ENCODE measurements at regions of chr1 and their contacts with region 1.

Region 1: DNA sequence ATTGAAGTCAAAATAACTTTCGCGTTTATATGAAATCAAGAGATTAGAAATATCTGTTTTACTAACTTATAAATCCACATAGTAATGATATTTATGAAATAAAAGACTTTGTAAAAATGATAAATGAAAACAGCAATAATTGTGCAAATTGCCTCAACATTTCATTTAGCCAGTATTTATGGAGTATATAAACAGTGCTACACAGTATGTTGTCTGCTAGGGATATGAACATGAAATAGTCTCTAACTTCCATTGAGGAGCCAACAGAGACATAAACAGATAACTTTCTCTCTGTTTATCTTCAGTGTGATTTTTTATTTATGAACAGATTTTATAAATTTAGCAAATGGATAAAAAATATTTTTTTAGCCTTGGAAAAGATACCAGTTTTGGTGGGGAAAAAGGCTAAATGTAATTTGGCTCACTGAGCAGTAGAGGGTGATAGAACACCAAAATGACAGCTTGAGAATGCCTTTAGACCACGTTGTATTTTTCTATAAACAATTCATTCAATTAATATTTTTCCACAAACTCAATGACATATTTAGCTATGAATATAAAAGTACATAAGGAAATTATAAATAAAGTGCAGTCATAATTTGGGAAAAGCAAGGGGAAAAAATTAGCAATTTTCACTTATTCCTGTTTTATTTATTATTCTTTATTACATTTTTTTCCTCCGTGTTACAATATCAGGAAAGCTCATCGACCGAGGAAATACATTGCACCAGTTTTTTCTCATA is 47.5 kb upstream of the EEIG2 start:
- DNase-seq: peak in 1 of 2 experiments; percentile 53
- H3K4me3 ChIP-seq: no peak overlapping the region
- H3K27ac ChIP-seq: no peak overlapping the region
- H3K4me1 ChIP-seq: 0 out of 2 replicates have a peak, but pooled peaks cover 5% of the 10 kb centered on the region
- H3K27me3 ChIP-seq: no peaks in the 10 kb centered on the region
- CTCF ChIP-seq: peak; percentile 97

Region 2: GRCh38 chr1:108559215-108560186 is 47.1 kb after region 1 on chr1 and contains the start of gene EEIG2:
- CTCF ChIA-PET with region 1: interaction called, 5 read pairs
- POLR2A ChIA-PET with region 1: no interaction called
- intact Hi-C with region 1: loop called (anchors 1 kb)
- DNase-seq: peak; percentile 69 to 89
- H3K4me3 ChIP-seq: peak within 1 kb of the TSS; percentile 69
- H3K27ac ChIP-seq: 0 out of 2 replicates have a peak within 1 kb of the TSS, but pooled peaks have one; percentile 18
- H3K4me1 ChIP-seq: peaks cover 26% of the 10 kb centered on the region
- H3K27me3 ChIP-seq: no peaks in the 10 kb centered on the region
- CTCF ChIP-seq: peak; percentile 62; the same call in 1 of the 2 replicates
- total RNA-seq, gene EEIG2: 31.6 and 31.9 TPM in 2 replicates

Region 3: DNA sequence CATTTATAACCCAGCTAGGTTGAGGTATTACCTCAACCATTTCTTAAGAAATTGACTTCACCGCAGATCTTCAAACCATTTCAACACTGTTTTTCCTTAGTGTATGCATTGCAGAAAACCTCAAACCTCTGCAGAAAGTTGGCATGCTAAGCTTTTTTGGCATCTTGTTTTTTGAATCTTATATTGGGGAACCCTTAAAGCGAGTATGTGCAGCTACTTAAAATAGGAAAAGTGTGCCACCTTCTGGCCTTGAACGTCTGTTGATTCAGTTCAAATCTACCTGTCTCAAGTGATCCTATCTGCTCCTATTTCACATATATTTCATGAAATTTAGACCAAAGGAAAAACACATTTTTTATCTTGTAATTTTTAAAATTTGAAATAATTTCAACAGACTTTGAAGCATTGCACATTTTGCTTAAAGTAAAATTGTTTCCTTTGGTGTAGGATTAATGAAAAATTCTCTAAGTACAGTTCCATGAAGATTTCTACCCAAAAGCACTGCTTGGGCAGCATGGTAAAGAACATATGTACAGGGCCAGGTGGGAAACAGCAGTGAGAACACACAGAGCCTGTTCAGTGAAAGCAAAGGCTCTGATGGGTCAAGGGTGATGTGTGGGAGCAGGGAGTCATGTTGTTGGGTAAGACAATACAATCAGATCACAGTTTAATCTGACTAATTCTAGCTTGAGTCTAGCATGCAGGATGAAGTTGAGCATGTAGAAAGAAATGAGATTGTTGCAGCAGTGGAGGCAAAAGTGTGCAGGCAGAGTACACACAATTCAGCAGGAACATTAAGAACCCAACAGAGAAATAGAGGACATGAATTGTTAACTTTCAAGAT is 131.3 kb after region 1 on chr1:
- CTCF ChIA-PET with region 1: interaction called, 3 read pairs
- POLR2A ChIA-PET with region 1: no interaction called
- intact Hi-C with region 1: loop called (anchors 1 kb)
- DNase-seq: peak; percentile 23 to 69
- H3K4me3 ChIP-seq: no peak overlapping the region
- H3K27ac ChIP-seq: no peak overlapping the region
- H3K4me1 ChIP-seq: peaks cover 11% of the 10 kb centered on the region
- H3K27me3 ChIP-seq: no peaks in the 10 kb centered on the region
- CTCF ChIP-seq: peak; percentile 82

Region 4: DNA sequence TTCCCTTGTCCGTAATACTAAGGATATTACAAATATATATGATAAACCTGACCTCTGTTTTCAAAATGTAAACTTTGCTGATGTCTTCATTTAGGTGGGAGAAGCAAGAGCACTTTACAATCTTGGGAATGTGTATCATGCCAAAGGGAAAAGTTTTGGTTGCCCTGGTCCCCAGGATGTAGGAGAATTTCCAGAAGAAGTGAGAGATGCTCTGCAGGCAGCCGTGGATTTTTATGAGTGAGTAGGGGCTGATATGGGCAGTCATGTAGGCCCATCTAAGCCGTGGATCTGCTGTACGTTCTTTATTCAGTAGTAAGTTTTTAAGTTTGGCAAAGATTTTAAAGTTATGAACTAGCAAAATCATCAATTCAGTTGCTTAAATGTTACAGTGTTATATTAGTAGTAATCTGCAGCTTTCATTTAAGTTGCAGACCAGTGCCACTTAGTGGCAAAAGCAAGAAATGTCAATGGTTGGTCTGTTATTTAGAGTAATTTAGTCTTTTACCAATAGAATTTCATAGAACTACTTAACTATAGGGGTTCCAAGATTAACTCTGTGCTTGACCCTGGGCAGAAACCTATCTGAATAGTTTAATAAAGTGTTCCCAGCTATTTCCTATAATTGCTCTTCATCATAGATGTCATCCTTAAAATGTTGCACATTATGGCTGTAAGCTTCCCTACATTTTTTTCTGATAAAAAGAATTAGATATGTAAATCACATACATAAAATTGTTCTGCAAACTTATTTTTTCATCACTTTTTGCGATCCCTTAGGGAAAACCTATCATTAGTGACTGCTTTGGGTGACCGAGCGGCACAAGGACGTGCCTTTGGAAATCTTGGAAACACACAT is 385.7 kb after region 1 on chr1:
- CTCF ChIA-PET with region 1: no interaction called
- POLR2A ChIA-PET with region 1: no interaction called
- intact Hi-C with region 1: loop called (anchors 5 kb)
- DNase-seq: peak in 1 of 2 experiments; percentile 77
- H3K4me3 ChIP-seq: no peak overlapping the region
- H3K27ac ChIP-seq: no peak overlapping the region
- H3K4me1 ChIP-seq: no peaks in the 10 kb centered on the region
- H3K27me3 ChIP-seq: no peaks in the 10 kb centered on the region
- CTCF ChIP-seq: peak; percentile 96

Region 5: GRCh38 chr1:109193653-109194590 is 681.5 kb after region 1 on chr1:
- CTCF ChIA-PET with region 1: no interaction called
- POLR2A ChIA-PET with region 1: no interaction called
- intact Hi-C with region 1: loop called (anchors 5 kb)
- DNase-seq: peak in 1 of 2 experiments; percentile 61
- H3K4me3 ChIP-seq: no peak overlapping the region
- H3K27ac ChIP-seq: no peak overlapping the region
- H3K4me1 ChIP-seq: peaks cover 24% of the 10 kb centered on the region
- H3K27me3 ChIP-seq: no peaks in the 10 kb centered on the region
- CTCF ChIP-seq: peak; percentile 93